ENCODE measurements at regions of chr11 and their contacts with region 1.

Region 1: GRCh38 chr11:62108017-62108750 is 15.6 kb upstream of the INCENP start:
- DNase-seq: peak; percentile 56
- CTCF ChIP-seq: peak; percentile 76

Region 2: GRCh38 chr11:61747192-61747966 is 360.8 kb before region 1 on chr11:
- CTCF ChIA-PET with region 1: interaction called, 33 read pairs
- POLR2A ChIA-PET with region 1: no interaction called
- DNase-seq: peak; percentile 89
- CTCF ChIP-seq: peak; percentile 94

Region 3: GRCh38 chr11:61871158-61871597 is 237.0 kb before region 1 on chr11:
- CTCF ChIA-PET with region 1: interaction called, 67 read pairs
- POLR2A ChIA-PET with region 1: no interaction called
- DNase-seq: peak; percentile 87
- CTCF ChIP-seq: peak; percentile 93

Region 4: DNA sequence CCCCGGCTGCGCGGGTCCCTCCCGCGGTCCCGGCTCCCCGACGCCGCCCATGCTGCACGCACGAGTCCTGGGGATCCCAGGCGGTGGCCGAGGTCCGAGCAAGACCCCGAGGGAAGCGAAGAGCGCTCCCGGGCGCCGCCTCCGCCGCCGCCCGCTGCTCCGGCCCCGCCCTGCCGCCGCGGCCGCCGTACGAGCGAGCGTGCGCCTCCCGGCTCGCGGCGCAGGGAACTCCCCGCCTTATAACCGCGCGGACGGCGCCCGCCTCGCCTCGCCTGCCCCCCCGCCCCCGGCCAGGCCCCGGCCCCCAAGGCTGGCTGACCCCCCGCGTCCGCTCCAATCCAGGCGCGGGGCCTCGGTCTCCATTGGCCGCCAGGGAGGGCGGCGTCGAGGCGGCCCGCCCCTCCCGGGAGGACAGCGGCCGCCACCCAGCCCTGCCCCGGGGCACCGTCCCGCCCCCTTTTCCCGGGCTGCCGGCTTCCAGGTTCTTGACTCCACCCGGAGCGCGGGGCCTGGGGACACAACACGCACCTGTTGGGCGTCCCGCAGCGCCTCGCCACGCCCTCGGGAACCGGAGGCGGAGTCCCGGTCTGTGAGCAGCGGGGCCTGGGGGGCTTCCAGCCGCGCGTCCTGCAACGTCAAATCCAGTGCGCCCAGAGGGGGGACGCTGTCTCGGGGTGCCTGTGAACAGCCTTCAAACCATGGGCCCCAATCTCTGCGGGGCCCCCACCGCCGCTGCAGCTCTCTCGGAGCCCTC is 216.7 kb before region 1 on chr11 and contains the start of gene FADS3:
- CTCF ChIA-PET with region 1: interaction called, 204 read pairs
- POLR2A ChIA-PET with region 1: no interaction called
- DNase-seq: peak; percentile 84
- CTCF ChIP-seq: no peak

Region 5: DNA sequence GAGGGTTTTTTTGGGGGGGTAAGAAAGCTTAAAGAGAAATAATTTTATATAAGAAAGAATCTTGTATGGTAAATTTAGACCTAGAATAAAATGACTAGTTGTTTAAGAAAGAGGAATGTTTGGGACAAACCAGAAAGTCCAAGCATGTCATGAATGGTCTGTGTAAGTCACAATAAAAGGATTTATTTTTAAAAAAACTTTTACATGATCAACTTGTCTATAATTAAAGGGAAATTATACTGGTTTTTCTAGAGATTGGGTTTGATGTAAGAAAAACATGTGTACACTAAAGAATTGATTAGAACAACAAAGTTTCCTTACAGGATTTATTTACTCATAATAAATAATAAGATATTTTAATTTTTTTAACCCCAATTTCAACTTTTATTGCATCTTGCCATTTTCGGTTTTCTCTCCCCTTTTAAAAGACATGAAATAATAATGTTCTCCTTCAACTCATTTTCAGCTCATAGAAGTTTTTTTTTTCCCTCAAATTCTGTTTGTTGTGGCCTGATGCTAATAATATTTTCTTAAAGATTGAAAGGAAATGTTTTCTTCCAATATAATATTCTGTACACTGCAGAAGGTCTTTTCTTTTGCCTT is 19.8 kb before region 1 on chr11:
- CTCF ChIA-PET with region 1: interaction called, 55 read pairs
- POLR2A ChIA-PET with region 1: no interaction called
- DNase-seq: no peak
- CTCF ChIP-seq: no peak

Region 6: GRCh38 chr11:62122076-62122475 is 13.9 kb after region 1 on chr11:
- CTCF ChIA-PET with region 1: interaction called, 18 read pairs
- POLR2A ChIA-PET with region 1: no interaction called
- DNase-seq: no peak
- CTCF ChIP-seq: no peak

Region 7: GRCh38 chr11:62132188-62132587 is 24.0 kb after region 1 on chr11:
- CTCF ChIA-PET with region 1: interaction called, 18 read pairs
- POLR2A ChIA-PET with region 1: no interaction called
- DNase-seq: no peak
- CTCF ChIP-seq: no peak

Region 8: DNA sequence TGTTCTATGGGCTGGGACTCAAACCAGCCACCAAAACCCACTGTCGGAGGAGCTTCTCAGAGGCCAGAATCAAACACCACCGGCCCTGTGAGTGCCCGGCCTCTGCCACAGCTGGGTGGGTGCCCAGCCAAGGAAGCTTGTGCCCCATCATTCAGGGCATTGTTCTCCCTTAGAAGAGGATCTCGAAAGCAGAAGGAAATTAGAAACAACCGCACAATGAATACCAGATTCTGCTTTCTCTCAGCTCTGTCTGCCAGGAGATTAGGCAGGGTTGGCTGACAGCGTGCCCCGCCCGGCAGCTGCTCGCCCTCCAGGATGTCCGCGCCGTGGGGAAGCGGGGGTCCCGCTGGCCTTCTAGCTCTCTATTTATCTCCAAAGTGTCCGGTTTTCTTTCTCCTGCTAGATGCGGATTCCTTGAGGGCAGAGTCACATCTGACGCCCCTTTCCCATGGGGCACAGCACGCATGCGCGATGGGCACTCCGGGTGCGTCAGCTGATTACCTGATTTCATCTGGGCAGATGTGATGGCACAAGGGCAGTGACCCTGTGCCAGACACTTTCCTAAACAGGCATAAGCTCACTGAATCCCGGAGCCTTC is 336.2 kb after region 1 on chr11:
- CTCF ChIA-PET with region 1: no interaction called
- POLR2A ChIA-PET with region 1: no interaction called
- DNase-seq: peak; percentile 57
- CTCF ChIP-seq: no peak